GM10248 (cell line): ENCODE measurements at regions of chr20 and their contacts with region 1.

Region 1: GRCh38 chr20:20492521-20493332 is 124.8 kb downstream of the INSM1 start:
- DNase-seq: no peak
- CTCF ChIP-seq: no peak

Region 2: DNA sequence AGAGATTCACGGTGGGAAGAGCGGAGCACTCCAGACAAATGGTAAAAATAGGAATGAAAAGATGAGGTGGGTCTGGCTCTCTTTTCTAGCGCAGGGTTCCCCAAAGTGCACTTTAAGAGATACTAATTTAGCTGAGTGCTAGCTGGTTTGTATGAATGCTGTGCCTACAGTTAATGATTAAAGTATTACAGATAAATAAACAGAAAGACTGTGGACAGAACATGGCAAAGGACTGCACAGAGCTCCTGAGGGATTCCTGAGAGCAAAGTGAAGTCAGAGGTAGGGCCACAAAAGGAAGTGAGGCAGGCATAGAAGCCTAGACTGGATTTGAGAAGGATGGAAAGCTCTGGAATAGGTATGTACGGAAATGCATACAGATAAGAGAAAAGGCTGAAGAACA is 10.3 kb before region 1 on chr20:
- CTCF ChIA-PET with region 1: interaction called, 10 read pairs
- POLR2A ChIA-PET with region 1: no interaction called
- DNase-seq: no peak
- CTCF ChIP-seq: no peak